ENCODE measurements at regions of chr12 and their contacts with region 1.

Region 1: DNA sequence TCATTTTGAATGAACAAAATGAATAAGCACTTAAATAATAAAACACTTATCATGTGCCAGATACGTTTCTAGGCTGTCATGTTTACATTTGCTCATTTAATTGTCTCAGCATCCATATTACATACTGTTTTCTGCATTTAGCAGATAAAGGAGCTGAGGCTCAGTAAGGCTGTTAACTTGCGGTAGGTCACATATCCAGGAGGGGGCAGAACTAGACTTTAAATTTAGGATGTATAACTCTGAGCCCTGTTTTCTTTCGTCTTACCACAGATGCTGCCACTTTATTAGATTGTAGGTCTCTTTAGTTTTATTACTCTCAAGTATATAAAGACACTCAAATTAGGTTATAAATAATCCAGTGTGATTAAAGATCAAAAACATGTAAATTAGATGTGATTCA is 17.7 kb downstream of the IRAK4 start:
- DNase-seq: peak in 2 of 9 experiments; percentile 47 to 56
- ATAC-seq: peak; percentile 80
- H3K4me3 ChIP-seq: no peak overlapping the region
- H3K4me3 Mint-ChIP-seq: no peak overlapping the region
- H3K27ac ChIP-seq: no peak overlapping the region
- H3K27ac Mint-ChIP-seq: no peak overlapping the region
- H3K4me1 ChIP-seq: no peaks in the 10 kb centered on the region
- H3K4me1 Mint-ChIP-seq: peaks cover 4% of the 10 kb centered on the region
- H3K27me3 ChIP-seq: no peaks in the 10 kb centered on the region
- H3K27me3 Mint-ChIP-seq: no peaks in the 10 kb centered on the region
- CTCF ChIP-seq: peak; percentile 56

Region 2: GRCh38 chr12:43740511-43741100 is 35.9 kb before region 1 on chr12:
- CTCF ChIA-PET with region 1: no interaction called
- POLR2A ChIA-PET with region 1: no interaction called
- intact Hi-C with region 1: loop called in 1 of 2 experiments (anchors 1 kb)
- DNase-seq: no peak
- ATAC-seq: no peak
- H3K4me3 ChIP-seq: no peak overlapping the region
- H3K4me3 Mint-ChIP-seq: no peak overlapping the region
- H3K27ac ChIP-seq: no peak overlapping the region
- H3K27ac Mint-ChIP-seq: no peak overlapping the region
- H3K4me1 ChIP-seq: no peaks in the 10 kb centered on the region
- H3K4me1 Mint-ChIP-seq: no peaks in the 10 kb centered on the region
- H3K27me3 ChIP-seq: no peaks in the 10 kb centered on the region
- H3K27me3 Mint-ChIP-seq: no peaks in the 10 kb centered on the region
- CTCF ChIP-seq: no peak

Region 3: GRCh38 chr12:43758728-43759563 is 17.6 kb before region 1 on chr12 and contains the starts of genes IRAK4 and PUS7L:
- CTCF ChIA-PET with region 1: interaction called, 8 read pairs
- POLR2A ChIA-PET with region 1: interaction called, 5 read pairs
- intact Hi-C with region 1: loop called in 1 of 2 experiments (anchors 1 kb)
- DNase-seq: peak; percentile 89 to 99 (median 95)
- ATAC-seq: peak; percentile 95
- H3K4me3 ChIP-seq: peak within 1 kb of the TSS; percentile 71 to 79
- H3K4me3 Mint-ChIP-seq: peak within 1 kb of the TSS; percentile 95
- H3K27ac ChIP-seq: peak within 1 kb of the TSS; percentile 80 to 96
- H3K27ac Mint-ChIP-seq: peak within 1 kb of the TSS; percentile 99
- H3K4me1 ChIP-seq: peaks cover 45% of the 10 kb centered on the region
- H3K4me1 Mint-ChIP-seq: peaks cover 77% of the 10 kb centered on the region
- H3K27me3 ChIP-seq: no peaks in the 10 kb centered on the region
- H3K27me3 Mint-ChIP-seq: no peaks in the 10 kb centered on the region
- CTCF ChIP-seq: no peak
- total RNA-seq, gene IRAK4: 19.6 to 22.3 TPM
- total RNA-seq, gene PUS7L: 10.3 to 12.6 TPM

Region 4: DNA sequence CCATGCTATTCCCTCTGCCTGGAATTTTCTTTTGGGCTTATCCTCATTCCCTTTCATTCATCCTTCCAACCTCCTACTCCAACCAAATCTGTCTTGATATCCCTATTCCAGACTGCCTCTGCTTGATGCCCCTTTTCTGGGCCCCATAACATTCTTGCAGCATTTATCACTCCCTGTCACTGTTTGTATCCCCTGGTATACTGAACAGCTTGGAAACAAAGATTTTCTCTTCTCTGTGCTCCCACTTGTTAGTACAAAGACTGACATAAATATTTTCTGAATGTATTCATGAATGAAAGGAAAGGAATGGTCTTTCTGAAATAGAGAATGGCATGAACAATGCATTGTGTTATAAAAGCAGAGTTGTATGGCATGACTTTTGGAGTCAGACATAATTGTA is 10.2 kb before region 1 on chr12:
- CTCF ChIA-PET with region 1: no interaction called
- POLR2A ChIA-PET with region 1: interaction called, 5 read pairs
- intact Hi-C with region 1: loop called in 1 of 2 experiments (anchors 1 kb)
- DNase-seq: no peak
- ATAC-seq: no peak
- H3K4me3 ChIP-seq: no peak overlapping the region
- H3K4me3 Mint-ChIP-seq: no peak overlapping the region
- H3K27ac ChIP-seq: no peak overlapping the region
- H3K27ac Mint-ChIP-seq: no peak overlapping the region
- H3K4me1 ChIP-seq: peaks cover 22% of the 10 kb centered on the region
- H3K4me1 Mint-ChIP-seq: peaks cover 37% of the 10 kb centered on the region
- H3K27me3 ChIP-seq: no peaks in the 10 kb centered on the region
- H3K27me3 Mint-ChIP-seq: no peaks in the 10 kb centered on the region
- CTCF ChIP-seq: no peak

Measured in CD8-positive, alpha-beta T cell (primary cell).